Caco-2 (cell line): ENCODE measurements at regions of chrX and their contacts with region 1.

Region 1: GRCh38 chrX:132292793-132293192 is 73.5 kb upstream of the RAP2C start:
- DNase-seq: peak; percentile 33 to 50
- H3K4me3 ChIP-seq: no peak overlapping the region
- H3K4me3 Mint-ChIP-seq: no peak overlapping the region
- H3K27ac Mint-ChIP-seq: no peak overlapping the region
- H3K4me1 ChIP-seq: peaks cover 6% of the 10 kb centered on the region
- H3K4me1 Mint-ChIP-seq: no peaks in the 10 kb centered on the region
- H3K27me3 ChIP-seq: no peaks in the 10 kb centered on the region
- H3K27me3 Mint-ChIP-seq: no peaks in the 10 kb centered on the region
- CTCF ChIP-seq: peak; percentile 22 to 35

Region 2: DNA sequence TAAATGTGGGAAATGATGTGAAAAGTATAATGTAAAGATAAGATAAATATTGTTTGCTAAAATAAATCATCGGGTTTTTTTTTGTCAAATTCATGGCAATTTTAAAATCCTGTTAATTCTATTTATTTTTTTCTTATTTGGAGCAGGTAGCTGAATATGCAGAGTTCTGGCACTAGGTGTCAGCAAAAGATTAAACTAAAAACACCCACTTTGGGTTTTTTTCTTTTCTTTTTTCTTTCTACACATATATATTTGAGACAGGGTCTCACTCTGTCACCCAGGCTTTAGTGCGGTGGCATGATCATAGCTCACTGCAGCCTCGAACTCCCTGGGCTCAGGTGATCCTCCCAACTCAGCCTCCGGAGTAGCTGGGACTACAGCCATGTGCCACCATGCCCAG is 66.6 kb before region 1 on chrX:
- CTCF ChIA-PET with region 1: interaction called, 4 read pairs
- POLR2A ChIA-PET with region 1: no interaction called
- intact Hi-C with region 1: loop called (anchors 10 kb)
- DNase-seq: no peak
- H3K4me3 ChIP-seq: no peak overlapping the region
- H3K4me3 Mint-ChIP-seq: no peak overlapping the region
- H3K27ac Mint-ChIP-seq: no peak overlapping the region
- H3K4me1 ChIP-seq: no peaks in the 10 kb centered on the region
- H3K4me1 Mint-ChIP-seq: peaks cover 10% of the 10 kb centered on the region
- H3K27me3 ChIP-seq: no peaks in the 10 kb centered on the region
- H3K27me3 Mint-ChIP-seq: no peaks in the 10 kb centered on the region
- CTCF ChIP-seq: peak; percentile 32 to 34

Region 3: DNA sequence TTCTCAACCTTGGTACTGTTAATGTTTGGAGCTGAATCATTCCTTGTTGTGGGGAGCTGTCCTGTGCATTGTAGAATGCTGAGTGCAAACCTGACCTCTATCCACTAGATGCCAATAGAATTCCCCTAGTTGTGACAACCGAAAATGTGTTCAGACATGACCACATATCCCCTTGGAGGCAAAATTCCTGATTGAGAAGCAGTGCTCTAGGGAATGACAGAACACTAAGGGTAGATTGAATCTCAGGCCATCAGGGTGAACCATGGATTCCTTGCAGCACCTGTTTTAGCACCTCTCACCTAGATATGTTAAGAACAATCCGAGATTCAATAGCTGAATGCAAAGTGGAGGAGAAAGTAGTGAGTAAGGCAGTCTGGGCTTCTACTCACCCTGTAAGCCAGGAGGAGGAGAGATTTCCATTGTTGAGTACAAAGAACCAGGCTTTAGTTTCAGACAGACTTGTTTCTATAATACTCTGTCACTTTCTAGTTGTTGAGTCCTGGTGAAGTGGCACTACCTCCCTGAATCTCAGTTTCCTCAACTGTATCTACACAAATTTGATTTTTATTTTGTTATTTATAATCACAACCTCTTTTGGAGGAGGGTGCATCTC is 37.4 kb after region 1 on chrX:
- CTCF ChIA-PET with region 1: interaction called, 5 read pairs
- POLR2A ChIA-PET with region 1: no interaction called
- intact Hi-C with region 1: loop called (anchors 2 kb)
- DNase-seq: peak; percentile 11 to 33
- H3K4me3 ChIP-seq: no peak overlapping the region
- H3K4me3 Mint-ChIP-seq: no peak overlapping the region
- H3K27ac Mint-ChIP-seq: no peak overlapping the region
- H3K4me1 ChIP-seq: peaks cover 26% of the 10 kb centered on the region
- H3K4me1 Mint-ChIP-seq: peaks cover 33% of the 10 kb centered on the region
- H3K27me3 ChIP-seq: no peaks in the 10 kb centered on the region
- H3K27me3 Mint-ChIP-seq: no peaks in the 10 kb centered on the region
- CTCF ChIP-seq: no peak

Region 4: GRCh38 chrX:132375934-132376333 is 83.1 kb after region 1 on chrX:
- CTCF ChIA-PET with region 1: no interaction called
- POLR2A ChIA-PET with region 1: no interaction called
- intact Hi-C with region 1: loop called (anchors 1 kb)
- DNase-seq: no peak
- H3K4me3 ChIP-seq: no peak overlapping the region
- H3K4me3 Mint-ChIP-seq: no peak overlapping the region
- H3K27ac Mint-ChIP-seq: no peak overlapping the region
- H3K4me1 ChIP-seq: peaks cover 19% of the 10 kb centered on the region
- H3K4me1 Mint-ChIP-seq: no peaks in the 10 kb centered on the region
- H3K27me3 ChIP-seq: no peaks in the 10 kb centered on the region
- H3K27me3 Mint-ChIP-seq: no peaks in the 10 kb centered on the region
- CTCF ChIP-seq: peak in 1 of 2 experiments; percentile 26

Region 5: GRCh38 chrX:132435222-132435621 is 142.4 kb after region 1 on chrX:
- CTCF ChIA-PET with region 1: no interaction called
- POLR2A ChIA-PET with region 1: no interaction called
- intact Hi-C with region 1: no loop called
- DNase-seq: no peak
- H3K4me3 ChIP-seq: no peak overlapping the region
- H3K4me3 Mint-ChIP-seq: no peak overlapping the region
- H3K27ac Mint-ChIP-seq: no peak overlapping the region
- H3K4me1 ChIP-seq: peaks cover 26% of the 10 kb centered on the region
- H3K4me1 Mint-ChIP-seq: peaks cover 25% of the 10 kb centered on the region
- H3K27me3 ChIP-seq: no peaks in the 10 kb centered on the region
- H3K27me3 Mint-ChIP-seq: no peaks in the 10 kb centered on the region
- CTCF ChIP-seq: no peak

Region 6: DNA sequence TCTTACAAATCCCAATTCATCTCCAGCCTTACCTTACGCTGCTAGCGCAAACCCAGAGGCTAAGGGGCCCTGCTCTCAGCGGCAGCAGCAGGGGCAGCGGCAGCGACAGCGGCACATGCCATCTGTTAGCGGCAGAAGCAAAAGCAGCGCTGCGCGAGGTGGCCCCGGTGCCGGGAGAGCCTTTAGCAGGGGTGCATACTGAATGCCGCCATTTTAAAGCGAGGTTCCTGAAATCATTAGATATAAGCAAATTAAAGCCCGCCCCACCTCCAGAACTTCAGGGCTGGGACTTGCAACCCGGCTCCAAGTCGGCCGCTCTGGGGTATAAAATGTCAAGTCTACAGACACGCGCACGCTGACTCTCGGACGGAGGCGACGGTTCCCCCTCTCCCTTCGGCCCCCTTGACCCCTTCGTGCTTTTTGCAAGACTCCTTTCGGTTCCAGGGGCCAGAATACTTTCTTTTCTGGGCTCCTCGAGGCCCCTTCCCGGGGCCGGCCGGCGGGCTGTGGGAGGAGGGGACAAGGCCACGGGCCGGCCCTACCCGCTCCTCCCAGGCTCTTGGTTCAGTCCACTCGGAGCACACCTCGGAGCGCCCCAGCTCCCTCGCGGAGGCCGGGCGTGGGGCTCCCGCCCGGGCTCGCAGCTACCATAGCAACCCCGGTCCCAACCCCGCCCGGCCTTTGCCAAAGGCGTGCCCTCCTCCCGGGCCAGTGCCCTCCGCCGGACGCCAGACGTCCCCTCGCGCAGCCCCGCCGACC is 196.2 kb after region 1 on chrX and contains the start of gene MBNL3:
- CTCF ChIA-PET with region 1: no interaction called
- POLR2A ChIA-PET with region 1: no interaction called
- intact Hi-C with region 1: loop called (anchors 10 kb)
- DNase-seq: peak; percentile 71
- H3K4me3 ChIP-seq: peak within 1 kb of the TSS; percentile 74
- H3K4me3 Mint-ChIP-seq: peak within 1 kb of the TSS; percentile 88
- H3K27ac Mint-ChIP-seq: peak within 1 kb of the TSS; percentile 63
- H3K4me1 ChIP-seq: peaks cover 18% of the 10 kb centered on the region; the same call in 1 of the 2 replicates
- H3K4me1 Mint-ChIP-seq: no peaks in the 10 kb centered on the region
- H3K27me3 ChIP-seq: no peaks in the 10 kb centered on the region
- H3K27me3 Mint-ChIP-seq: no peaks in the 10 kb centered on the region
- CTCF ChIP-seq: no peak
- total RNA-seq, gene MBNL3: 174 and 195 TPM in 2 replicates

Region 7: GRCh38 chrX:132592880-132593279 is 300.1 kb after region 1 on chrX:
- CTCF ChIA-PET with region 1: interaction called, 4 read pairs
- POLR2A ChIA-PET with region 1: no interaction called
- intact Hi-C with region 1: loop called (anchors 1 kb)
- DNase-seq: peak; percentile 23 to 31
- H3K4me3 ChIP-seq: no peak overlapping the region
- H3K4me3 Mint-ChIP-seq: no peak overlapping the region
- H3K27ac Mint-ChIP-seq: no peak overlapping the region
- H3K4me1 ChIP-seq: peaks cover 20% of the 10 kb centered on the region
- H3K4me1 Mint-ChIP-seq: no peaks in the 10 kb centered on the region
- H3K27me3 ChIP-seq: no peaks in the 10 kb centered on the region
- H3K27me3 Mint-ChIP-seq: no peaks in the 10 kb centered on the region
- CTCF ChIP-seq: peak; percentile 41 to 52